Calu3 (cell line): ENCODE measurements at regions of chr19 and their contacts with region 1.

Region 1: GRCh38 chr19:44777715-44778347 is at the start of gene CBLC:
- DNase-seq: peak; percentile 99
- H3K4me3 Mint-ChIP-seq: peak within 1 kb of the TSS; percentile 60
- H3K27ac Mint-ChIP-seq: peak within 1 kb of the TSS; percentile 92
- H3K4me1 Mint-ChIP-seq: peaks cover 25% of the 10 kb centered on the region
- H3K27me3 Mint-ChIP-seq: no peaks in the 10 kb centered on the region
- CTCF ChIP-seq: no peak
- total RNA-seq, gene CBLC: 54.3 and 63.1 TPM in 2 replicates

Region 2: GRCh38 chr19:44176590-44176989 is 601.2 kb before region 1 on chr19:
- CTCF ChIA-PET with region 1: no interaction called
- intact Hi-C with region 1: no loop called
- DNase-seq: no peak
- H3K4me3 Mint-ChIP-seq: no peak overlapping the region
- H3K27ac Mint-ChIP-seq: peak overlapping the region; percentile 39
- H3K4me1 Mint-ChIP-seq: no peaks in the 10 kb centered on the region
- H3K27me3 Mint-ChIP-seq: no peaks in the 10 kb centered on the region
- CTCF ChIP-seq: no peak

Region 3: GRCh38 chr19:44741841-44742352 is 35.9 kb before region 1 on chr19:
- CTCF ChIA-PET with region 1: interaction called, 15 read pairs
- intact Hi-C with region 1: loop called (anchors 5 kb)
- DNase-seq: peak; percentile 99
- H3K4me3 Mint-ChIP-seq: peak overlapping the region; percentile 56
- H3K27ac Mint-ChIP-seq: peak overlapping the region; percentile 91
- H3K4me1 Mint-ChIP-seq: peaks cover 74% of the 10 kb centered on the region
- H3K27me3 Mint-ChIP-seq: no peaks in the 10 kb centered on the region
- CTCF ChIP-seq: no peak

Region 4: GRCh38 chr19:44807652-44808462 is 30.0 kb after region 1 on chr19:
- CTCF ChIA-PET with region 1: interaction called, 12 read pairs
- intact Hi-C with region 1: no loop called
- DNase-seq: peak; percentile 66
- H3K4me3 Mint-ChIP-seq: peak overlapping the region; percentile 74
- H3K27ac Mint-ChIP-seq: peak overlapping the region; percentile 86
- H3K4me1 Mint-ChIP-seq: peaks cover 22% of the 10 kb centered on the region
- H3K27me3 Mint-ChIP-seq: no peaks in the 10 kb centered on the region
- CTCF ChIP-seq: peak; percentile 65

Region 5: DNA sequence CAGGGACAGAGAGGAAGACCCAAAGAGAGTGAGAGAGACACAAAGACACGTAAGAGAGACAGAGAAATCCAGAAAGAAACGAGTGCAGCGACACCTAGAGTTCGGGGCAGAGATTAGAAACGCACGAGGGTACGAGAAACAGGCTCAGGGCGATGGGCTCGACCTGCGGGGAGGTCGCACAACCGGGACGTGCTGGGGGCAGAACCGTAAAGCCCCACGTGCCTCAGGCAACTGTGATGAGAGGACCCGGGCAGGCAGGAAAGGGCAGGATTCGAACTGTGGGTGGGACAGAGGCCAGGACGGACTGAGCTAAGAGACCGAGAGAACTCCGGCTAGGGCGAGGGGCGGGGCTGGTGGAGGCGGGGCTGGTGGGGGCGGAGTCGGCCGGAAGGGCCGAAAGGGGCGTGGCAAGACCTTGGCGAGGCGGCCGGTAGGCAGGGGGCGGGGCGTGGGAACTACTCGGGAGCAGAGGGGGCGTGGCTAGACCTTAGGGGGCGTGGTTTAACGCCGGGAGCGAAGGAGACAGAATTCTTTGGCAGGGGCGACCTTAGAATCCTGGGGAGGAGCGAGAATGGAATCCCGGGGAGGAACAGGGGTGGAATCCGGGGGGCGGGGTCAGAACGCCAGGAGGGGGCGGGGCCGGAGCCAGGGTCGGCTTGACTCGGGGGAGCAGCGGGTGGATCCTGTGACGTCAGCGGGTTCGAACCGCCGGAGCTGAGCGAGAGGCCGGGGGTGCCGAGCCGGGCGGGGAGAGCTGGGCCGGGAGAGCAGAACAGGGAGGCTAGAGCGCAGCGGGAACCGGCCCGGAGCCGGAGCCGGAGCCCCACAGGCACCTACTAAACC is 68.0 kb after region 1 on chr19 and contains the start of gene NECTIN2:
- CTCF ChIA-PET with region 1: interaction called, 8 read pairs
- intact Hi-C with region 1: loop called (anchors 2 kb)
- DNase-seq: peak; percentile 100
- H3K4me3 Mint-ChIP-seq: peak within 1 kb of the TSS; percentile 66
- H3K27ac Mint-ChIP-seq: peak within 1 kb of the TSS; percentile 73
- H3K4me1 Mint-ChIP-seq: peaks cover 34% of the 10 kb centered on the region
- H3K27me3 Mint-ChIP-seq: no peaks in the 10 kb centered on the region
- CTCF ChIP-seq: peak; percentile 83
- total RNA-seq, gene NECTIN2: 137 and 174 TPM in 2 replicates

Region 6: GRCh38 chr19:44869733-44870470 is 92.1 kb after region 1 on chr19:
- CTCF ChIA-PET with region 1: no interaction called
- intact Hi-C with region 1: no loop called
- DNase-seq: no peak
- H3K4me3 Mint-ChIP-seq: no peak overlapping the region
- H3K27ac Mint-ChIP-seq: peak overlapping the region; percentile 11
- H3K4me1 Mint-ChIP-seq: no peaks in the 10 kb centered on the region
- H3K27me3 Mint-ChIP-seq: no peaks in the 10 kb centered on the region
- CTCF ChIP-seq: no peak